Activated CD4-positive, alpha-beta T cell treated with anti-CD3 and anti-CD28 coated beads for 36 hours (primary cell): ENCODE measurements at regions of chr9 and their contacts with region 1.

Region 1: GRCh38 chr9:12838546-12838945 is 63.7 kb downstream of the LURAP1L start:
- DNase-seq: no peak
- ATAC-seq: no peak
- H3K4me3 Mint-ChIP-seq: no peak overlapping the region
- H3K27ac Mint-ChIP-seq: no peak overlapping the region
- H3K4me1 Mint-ChIP-seq: no peaks in the 10 kb centered on the region
- H3K27me3 Mint-ChIP-seq: no peaks in the 10 kb centered on the region

Region 2: DNA sequence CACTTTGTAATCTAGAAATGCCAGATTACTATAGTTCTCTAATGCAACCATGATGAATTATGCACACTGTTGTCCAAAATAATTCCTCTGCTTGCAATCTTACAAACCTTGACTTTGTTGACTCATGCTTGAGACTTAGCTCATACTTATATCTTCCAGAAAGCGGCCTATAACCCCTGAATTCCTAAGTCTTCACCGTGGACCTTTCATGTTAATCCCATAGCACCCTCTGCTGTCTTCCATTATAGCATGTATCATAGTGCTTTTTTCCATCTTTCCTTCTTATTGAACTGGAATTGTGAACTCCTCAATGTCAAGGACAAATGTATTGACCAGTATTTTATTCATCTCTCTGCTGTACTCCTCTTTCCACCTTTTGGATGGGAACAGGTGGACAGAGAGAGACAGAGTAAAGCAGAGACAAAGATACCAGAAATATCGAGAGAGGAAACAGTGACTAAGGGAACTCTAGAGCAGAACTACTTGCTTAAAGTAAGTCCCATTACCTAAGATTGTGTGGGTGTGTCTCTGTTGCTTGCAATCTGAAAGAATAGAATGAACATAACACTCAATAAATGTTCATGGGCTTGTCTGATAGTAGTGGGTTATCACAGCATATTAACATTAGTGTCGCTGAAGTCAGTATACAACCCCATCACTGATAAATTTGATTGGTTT is 46.3 kb after region 1 on chr9:
- CTCF ChIA-PET with region 1: no interaction called
- POLR2A ChIA-PET with region 1: no interaction called
- intact Hi-C with region 1: loop called in 1 of 2 experiments (anchors 5 kb)
- DNase-seq: no peak
- ATAC-seq: no peak
- H3K4me3 Mint-ChIP-seq: no peak overlapping the region
- H3K27ac Mint-ChIP-seq: no peak overlapping the region
- H3K4me1 Mint-ChIP-seq: no peaks in the 10 kb centered on the region
- H3K27me3 Mint-ChIP-seq: no peaks in the 10 kb centered on the region

Region 3: GRCh38 chr9:12933957-12934356 is 95.4 kb after region 1 on chr9:
- CTCF ChIA-PET with region 1: no interaction called
- POLR2A ChIA-PET with region 1: no interaction called
- intact Hi-C with region 1: no loop called
- DNase-seq: no peak
- ATAC-seq: no peak
- H3K4me3 Mint-ChIP-seq: no peak overlapping the region
- H3K27ac Mint-ChIP-seq: no peak overlapping the region
- H3K4me1 Mint-ChIP-seq: no peaks in the 10 kb centered on the region
- H3K27me3 Mint-ChIP-seq: no peaks in the 10 kb centered on the region